Ovary (tissue), 10 donors: ENCODE measurements at regions of chr15 and their contacts with region 1.

Region 1: DNA sequence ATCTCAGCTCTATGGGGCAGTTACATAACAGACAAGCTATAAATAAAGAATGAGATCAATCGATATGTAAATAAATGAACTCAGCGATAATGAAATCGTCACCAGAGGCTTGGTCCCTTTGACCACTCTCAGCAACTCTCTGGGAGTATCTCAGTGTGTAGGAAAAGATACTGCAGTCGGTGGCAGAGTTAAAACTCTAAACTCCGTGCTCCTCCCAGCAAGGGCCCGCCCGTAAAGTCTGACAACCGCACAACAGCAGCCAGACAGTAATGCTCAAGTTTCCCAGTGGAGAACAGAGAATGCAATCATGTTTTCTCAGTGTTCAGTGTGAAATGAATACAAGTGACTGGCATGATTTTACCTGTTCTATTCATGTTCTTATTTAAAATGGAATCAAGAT is 28.3 kb upstream of the IGF1R start:
- DNase-seq: no peak
- H3K4me3 ChIP-seq: no peak overlapping the region
- H3K27ac ChIP-seq: no peak overlapping the region
- H3K4me1 ChIP-seq: no peaks in the 10 kb centered on the region
- H3K27me3 ChIP-seq: no peaks in the 10 kb centered on the region
- CTCF ChIP-seq: no peak
- EP300 ChIP-seq: no peak
- POLR2A ChIP-seq: no peak

Region 2: GRCh38 chr15:98035577-98036010 is 584.4 kb before region 1 on chr15:
- intact Hi-C with region 1: no loop called
- DNase-seq: no peak
- H3K4me3 ChIP-seq: no peak overlapping the region
- H3K27ac ChIP-seq: no peak overlapping the region
- H3K4me1 ChIP-seq: no peaks in the 10 kb centered on the region
- H3K27me3 ChIP-seq: no peaks in the 10 kb centered on the region
- CTCF ChIP-seq: no peak
- EP300 ChIP-seq: no peak
- POLR2A ChIP-seq: no peak

Region 3: DNA sequence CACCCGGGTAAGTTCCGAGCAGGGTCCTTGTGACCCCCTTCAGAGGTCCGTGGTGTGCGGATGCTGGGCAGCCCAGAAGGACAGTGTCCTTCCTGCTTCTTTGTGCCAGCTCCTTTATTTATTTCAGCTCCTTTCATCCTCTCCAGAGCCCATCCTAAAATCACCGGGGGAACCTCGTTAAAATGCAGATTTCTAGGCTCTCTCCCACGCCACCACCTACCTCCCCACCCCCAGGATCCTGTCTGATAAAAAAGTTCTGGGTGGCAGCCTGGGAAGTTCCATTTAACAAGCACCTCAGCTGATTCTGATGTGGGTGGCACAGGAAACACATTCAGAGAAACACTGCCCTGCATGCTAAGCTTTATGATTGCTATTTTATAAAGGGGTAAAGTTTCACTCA is 15.8 kb after region 1 on chr15:
- intact Hi-C with region 1: loop called in 1 of 4 experiments (anchors 2 kb)
- DNase-seq: no peak
- H3K4me3 ChIP-seq: no peak overlapping the region
- H3K27ac ChIP-seq: no peak overlapping the region
- H3K4me1 ChIP-seq: no peaks in the 10 kb centered on the region
- H3K27me3 ChIP-seq: no peaks in the 10 kb centered on the region
- CTCF ChIP-seq: no peak
- EP300 ChIP-seq: no peak
- POLR2A ChIP-seq: no peak